Activated B cell treated with CpG ODN at 0.5 μM for 24 hours (primary cell): ENCODE measurements at regions of chr5 and their contacts with region 1.

Region 1: DNA sequence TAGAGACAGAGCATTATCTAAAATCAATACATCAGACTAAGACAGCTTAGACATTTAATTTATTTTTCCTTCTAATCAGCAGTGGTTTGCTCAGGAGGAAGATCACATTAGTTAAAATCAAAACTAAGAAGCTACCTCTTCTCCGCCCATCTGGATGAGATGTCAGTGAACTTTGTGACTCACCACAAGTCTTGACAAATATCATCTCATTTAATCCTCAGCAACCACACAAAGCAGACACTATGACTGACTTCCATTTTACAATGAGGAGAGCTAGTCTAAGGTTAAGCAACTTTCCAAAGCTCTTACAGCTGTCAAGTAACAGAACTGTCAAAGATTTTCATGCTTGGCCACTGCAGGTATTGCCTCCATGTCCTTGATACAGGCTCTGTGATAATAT is 289.5 kb downstream of the DEPDC1B start:
- DNase-seq: no peak
- ATAC-seq: no peak
- H3K4me3 Mint-ChIP-seq: no peak overlapping the region
- H3K27ac Mint-ChIP-seq: no peak overlapping the region
- H3K4me1 Mint-ChIP-seq: no peaks in the 10 kb centered on the region
- H3K27me3 Mint-ChIP-seq: no peaks in the 10 kb centered on the region
- CTCF ChIP-seq: no peak

Region 2: DNA sequence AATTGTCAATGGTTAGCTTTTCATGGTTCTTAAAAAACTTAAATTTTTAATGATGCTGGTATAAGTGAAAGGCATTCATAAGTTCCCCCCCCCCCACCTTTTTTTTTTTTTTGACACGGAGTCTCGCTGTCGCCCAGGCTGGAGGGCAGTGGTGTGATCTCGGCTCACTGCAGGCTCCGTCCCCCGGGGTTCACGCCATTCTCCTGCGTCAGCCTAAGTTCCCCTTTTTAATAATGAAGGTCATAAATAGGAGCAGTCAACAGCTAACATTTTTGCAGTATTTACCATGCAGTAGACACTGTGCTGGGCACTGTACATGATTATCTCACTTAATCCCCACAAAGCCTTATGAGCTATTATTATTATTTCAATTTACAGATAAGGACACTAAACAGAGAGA is 1073.2 kb before region 1 on chr5:
- CTCF ChIA-PET with region 1: no interaction called
- POLR2A ChIA-PET with region 1: interaction called, 13 read pairs
- intact Hi-C with region 1: no loop called
- DNase-seq: no peak
- ATAC-seq: peak; percentile 92
- H3K4me3 Mint-ChIP-seq: peak overlapping the region; percentile 24
- H3K27ac Mint-ChIP-seq: peak overlapping the region; percentile 46
- H3K4me1 Mint-ChIP-seq: peaks cover 19% of the 10 kb centered on the region
- H3K27me3 Mint-ChIP-seq: no peaks in the 10 kb centered on the region
- CTCF ChIP-seq: no peak

Region 3: GRCh38 chr5:60332244-60333004 is 78.0 kb before region 1 on chr5:
- CTCF ChIA-PET with region 1: no interaction called
- POLR2A ChIA-PET with region 1: no interaction called
- intact Hi-C with region 1: no loop called
- DNase-seq: no peak
- ATAC-seq: no peak
- H3K4me3 Mint-ChIP-seq: no peak overlapping the region
- H3K27ac Mint-ChIP-seq: no peak overlapping the region
- H3K4me1 Mint-ChIP-seq: no peaks in the 10 kb centered on the region
- H3K27me3 Mint-ChIP-seq: no peaks in the 10 kb centered on the region
- CTCF ChIP-seq: no peak

Region 4: GRCh38 chr5:60522292-60522905 is 112.0 kb after region 1 on chr5:
- CTCF ChIA-PET with region 1: no interaction called
- POLR2A ChIA-PET with region 1: no interaction called
- intact Hi-C with region 1: no loop called
- DNase-seq: no peak
- ATAC-seq: peak; percentile 78
- H3K4me3 Mint-ChIP-seq: no peak overlapping the region
- H3K27ac Mint-ChIP-seq: no peak overlapping the region
- H3K4me1 Mint-ChIP-seq: peaks cover 38% of the 10 kb centered on the region
- H3K27me3 Mint-ChIP-seq: no peaks in the 10 kb centered on the region
- CTCF ChIP-seq: no peak